K562 (cell line): ENCODE measurements at regions of chr11 and their contacts with region 1.

Region 1: GRCh38 chr11:71998662-71999310 is at the start of gene IL18BP:
- DNase-seq: no peak
- ATAC-seq: no peak
- H3K4me3 ChIP-seq: no peak within 1 kb of the TSS
- H3K27ac ChIP-seq: peak within 1 kb of the TSS; percentile 34
- H3K4me1 ChIP-seq: peaks cover 48 to 73% of the 10 kb centered on the region in 2 experiments
- H3K27me3 ChIP-seq: no peaks in the 10 kb centered on the region
- CTCF ChIP-seq: no peak
- EP300 ChIP-seq: no peak
- POLR2A ChIP-seq: 0 out of 2 replicates have a peak, but pooled peaks have one; percentile 12
- RAD21 ChIP-seq: no peak
- polyA plus RNA-seq, gene IL18BP: 0.34 to 0.35 TPM

Region 2: DNA sequence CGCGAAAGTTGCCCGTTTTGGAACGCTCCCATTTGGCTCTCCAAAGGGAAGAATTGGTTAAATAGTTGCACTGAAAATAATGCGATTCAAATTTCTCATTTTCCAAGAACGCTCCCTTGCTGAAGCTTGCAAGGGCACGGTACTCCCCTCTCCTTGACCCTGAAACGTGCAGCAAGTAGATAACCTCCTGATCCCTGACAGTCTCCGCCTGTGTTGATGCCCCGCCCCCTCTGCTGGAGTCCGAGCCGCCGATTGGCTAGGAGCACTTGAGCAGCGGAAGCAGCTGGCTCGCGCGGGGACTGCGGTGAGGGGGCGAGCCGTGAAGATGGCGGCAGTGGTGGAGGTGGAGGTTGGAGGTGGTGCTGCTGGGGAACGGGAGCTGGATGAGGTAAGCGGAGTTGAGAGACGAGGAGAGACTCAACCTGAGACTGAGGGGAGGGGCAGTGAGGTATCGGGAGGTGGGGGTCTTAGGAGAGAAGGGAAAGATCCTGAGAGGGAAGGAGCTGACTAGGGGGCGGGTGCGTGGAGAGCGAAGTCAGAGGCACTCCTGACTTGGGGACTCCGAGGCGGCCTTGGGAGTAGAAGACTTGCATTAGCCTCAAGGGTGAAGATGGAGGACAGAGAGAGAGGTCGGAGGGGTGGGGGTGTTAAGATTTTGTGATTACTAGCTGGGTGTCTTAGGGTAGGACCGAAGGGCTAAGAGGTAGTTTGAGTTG is 69.9 kb before region 1 on chr11 and contains the start of gene RNF121:
- CTCF ChIA-PET with region 1: no interaction called
- POLR2A ChIA-PET with region 1: no interaction called
- in situ Hi-C with region 1: no loop called
- intact Hi-C with region 1: no loop called
- DNase-seq: peak; percentile 96 to 98 (median 96)
- ATAC-seq: peak; percentile 97
- H3K4me3 ChIP-seq: peak within 1 kb of the TSS; percentile 53
- H3K27ac ChIP-seq: peak within 1 kb of the TSS; percentile 99
- H3K4me1 ChIP-seq: peaks cover 6 to 10% of the 10 kb centered on the region in 2 experiments; a peak in 2 of 5 replicates
- H3K27me3 ChIP-seq: no peaks in the 10 kb centered on the region
- CTCF ChIP-seq: no peak
- EP300 ChIP-seq: no peak
- POLR2A ChIP-seq: peak; percentile 91
- RAD21 ChIP-seq: no peak
- polyA plus RNA-seq, gene RNF121: 8.0 to 11.4 TPM

Region 3: DNA sequence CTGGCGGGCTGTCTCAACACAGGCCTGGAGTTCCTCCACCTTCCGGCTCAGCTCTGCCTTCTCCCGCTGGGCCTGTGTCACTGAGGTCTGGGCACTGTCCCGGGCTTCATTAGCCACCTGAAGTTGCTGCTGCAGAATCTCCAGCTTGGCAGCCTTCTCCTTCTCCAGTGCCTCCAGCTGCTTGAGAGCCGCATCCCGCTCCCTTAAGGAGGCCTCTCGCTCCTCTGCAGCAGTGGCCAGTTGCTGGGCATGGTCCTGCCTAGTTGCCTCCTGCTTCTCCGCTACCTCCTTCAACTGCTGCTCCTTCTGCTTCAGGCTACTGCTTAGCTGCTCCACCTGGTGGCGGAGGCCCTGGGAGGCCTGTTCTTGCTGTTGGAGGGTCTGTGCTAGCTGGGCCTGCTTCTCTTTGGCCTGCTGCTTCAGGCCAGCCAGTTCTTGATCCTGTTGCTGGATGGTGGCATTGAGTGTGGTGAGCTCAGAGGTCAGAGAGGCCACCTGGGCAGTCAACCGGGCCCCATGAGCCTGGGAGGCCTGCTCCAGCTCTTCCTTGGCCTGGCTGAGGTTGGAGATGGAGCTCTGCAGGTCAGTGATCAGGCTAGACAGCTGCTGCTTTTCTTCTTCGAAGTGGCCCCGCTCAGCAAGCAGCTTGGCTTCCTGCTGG is 16.9 kb after region 1 on chr11:
- CTCF ChIA-PET with region 1: no interaction called
- POLR2A ChIA-PET with region 1: interaction called, 10 read pairs
- in situ Hi-C with region 1: no loop called
- intact Hi-C with region 1: no loop called
- DNase-seq: peak in 1 of 4 experiments; percentile 44
- ATAC-seq: peak; percentile 66
- H3K4me3 ChIP-seq: no peak overlapping the region
- H3K27ac ChIP-seq: no peak overlapping the region
- H3K4me1 ChIP-seq: peaks cover 0 to 7% of the 10 kb centered on the region in 2 experiments; a peak in 1 of 5 replicates
- H3K27me3 ChIP-seq: no peaks in the 10 kb centered on the region
- CTCF ChIP-seq: peak; percentile 58 to 64 (median 61); a peak in 5 of 6 replicates
- EP300 ChIP-seq: no peak
- POLR2A ChIP-seq: no peak
- RAD21 ChIP-seq: peak; percentile 34 to 50; a peak in 3 of 4 replicates

Region 4: GRCh38 chr11:73342633-73343032 is 1343.8 kb after region 1 on chr11:
- CTCF ChIA-PET with region 1: no interaction called
- POLR2A ChIA-PET with region 1: no interaction called
- in situ Hi-C with region 1: no loop called
- intact Hi-C with region 1: no loop called
- DNase-seq: no peak
- ATAC-seq: no peak
- H3K4me3 ChIP-seq: no peak overlapping the region
- H3K27ac ChIP-seq: no peak overlapping the region
- H3K4me1 ChIP-seq: peaks cover 0 to 23% of the 10 kb centered on the region in 2 experiments; a peak in 2 of 5 replicates
- H3K27me3 ChIP-seq: peaks cover 0 to 28% of the 10 kb centered on the region in 2 experiments; a peak in 3 of 5 replicates
- CTCF ChIP-seq: no peak
- EP300 ChIP-seq: no peak
- POLR2A ChIP-seq: no peak
- RAD21 ChIP-seq: no peak